ENCODE measurements at regions of chr16 and their contacts with region 1.

Region 1: DNA sequence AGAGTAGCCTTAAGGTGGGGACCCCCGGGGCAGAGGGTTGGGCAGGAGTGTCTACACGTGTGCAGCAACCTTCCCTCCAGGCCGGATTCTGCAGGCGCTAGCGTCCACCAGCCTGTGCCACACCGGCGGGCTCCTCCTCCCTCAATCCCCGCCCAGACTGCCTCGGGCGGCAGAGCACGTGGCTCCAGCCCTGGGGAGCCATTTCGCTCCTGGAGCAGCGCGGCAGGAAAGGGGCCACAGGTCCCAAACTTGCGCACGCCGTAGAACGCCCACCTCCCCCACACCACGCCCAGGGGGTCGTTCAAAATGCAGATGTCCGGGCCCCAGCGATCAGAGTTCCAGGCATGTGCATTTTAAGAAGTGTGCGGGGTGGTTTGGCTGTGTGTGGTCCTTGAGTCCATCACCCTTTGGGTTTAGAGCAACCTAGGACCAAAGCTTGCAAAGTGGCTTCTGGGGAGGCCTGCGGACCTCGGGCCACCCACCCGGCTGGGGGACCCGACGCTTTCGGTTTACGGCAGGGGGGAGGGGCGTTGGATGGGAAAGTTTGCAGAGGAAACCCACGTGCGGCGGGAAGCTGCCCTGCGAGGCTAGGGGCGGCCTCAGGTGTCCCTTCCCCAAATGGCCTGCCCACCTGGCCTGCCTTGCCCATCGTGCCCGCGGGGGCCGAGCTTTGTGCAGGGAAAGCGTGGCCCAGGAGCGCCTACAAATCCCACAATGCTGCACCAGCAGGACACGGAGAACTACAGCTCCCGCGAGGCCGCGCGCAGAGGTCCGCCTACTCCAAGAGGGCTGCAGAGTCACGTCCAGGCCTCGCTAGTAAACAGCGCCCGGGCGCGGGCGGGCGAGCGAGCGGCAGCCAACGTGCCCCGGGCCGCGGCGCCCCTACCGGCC is 1.4 kb downstream of the TFAP4 start:
- DNase-seq: peak; percentile 89 to 96
- ATAC-seq: peak; percentile 73 to 86
- H3K4me3 ChIP-seq: peak overlapping the region; percentile 87
- H3K27ac ChIP-seq: peak overlapping the region; percentile 98 to 99
- H3K4me1 ChIP-seq: peaks cover 10% of the 10 kb centered on the region
- CTCF ChIP-seq: peak; percentile 16; the same call in 1 of the 3 replicates
- EP300 ChIP-seq: no peak
- POLR2A ChIP-seq: peak; percentile 61
- RAD21 ChIP-seq: no peak

Region 2: GRCh38 chr16:4200000-4200780 is 71.2 kb before region 1 on chr16:
- CTCF ChIA-PET with region 1: interaction called, 10 read pairs
- POLR2A ChIA-PET with region 1: interaction called, 4 read pairs
- DNase-seq: peak; percentile 72 to 74
- ATAC-seq: peak; percentile 96
- H3K4me3 ChIP-seq: no peak overlapping the region
- H3K27ac ChIP-seq: peak overlapping the region in 1 of 2 experiments; percentile 65; a peak in 3 of 6 replicates
- H3K4me1 ChIP-seq: peaks cover 7% of the 10 kb centered on the region; the same call in 2 of the 3 replicates
- CTCF ChIP-seq: peak; percentile 66
- EP300 ChIP-seq: no peak
- POLR2A ChIP-seq: no peak
- RAD21 ChIP-seq: peak; percentile 86 to 89

Region 3: DNA sequence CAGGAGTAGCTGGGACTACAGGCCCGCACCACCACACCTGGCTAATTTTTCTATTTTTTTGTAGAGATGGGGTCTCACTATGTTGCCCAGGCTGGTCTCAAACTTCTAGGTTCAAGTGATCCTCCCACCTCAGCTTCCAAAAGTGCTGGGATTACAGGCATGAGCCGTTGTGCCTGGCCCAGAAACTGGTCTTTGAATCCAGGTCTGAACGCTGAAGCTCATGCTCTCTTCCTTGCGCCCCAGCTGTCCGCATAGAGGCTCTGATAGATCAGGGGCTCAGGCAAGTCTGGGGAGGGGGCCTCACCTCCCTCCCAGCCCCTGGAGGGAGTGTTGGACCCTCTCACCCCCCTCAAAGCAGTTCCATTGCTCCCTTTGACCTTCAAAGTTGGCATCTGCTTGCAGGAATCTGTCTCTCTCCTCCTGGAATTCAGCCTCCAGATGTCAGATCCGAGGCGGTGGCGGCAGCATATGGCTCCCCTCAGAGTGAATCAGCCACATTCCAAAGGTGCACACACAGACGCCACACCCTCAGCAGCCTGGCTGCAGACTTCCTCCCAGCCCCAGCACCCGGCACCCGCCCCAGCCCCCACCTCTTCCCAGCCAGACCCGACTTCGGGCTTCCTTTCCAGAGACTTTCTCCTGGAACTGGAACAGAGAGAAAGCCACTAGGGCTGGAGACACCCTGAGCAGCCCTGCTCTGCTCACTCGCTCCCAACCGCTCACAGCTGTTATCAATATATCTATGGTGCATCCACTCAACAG is 27.5 kb after region 1 on chr16:
- CTCF ChIA-PET with region 1: interaction called, 152 read pairs
- POLR2A ChIA-PET with region 1: interaction called, 39 read pairs
- DNase-seq: peak; percentile 95 to 97
- ATAC-seq: peak; percentile 96 to 99
- H3K4me3 ChIP-seq: peak overlapping the region; percentile 11; the same call in 1 of the 3 replicates
- H3K27ac ChIP-seq: peak overlapping the region; percentile 94 to 99
- H3K4me1 ChIP-seq: peaks cover 57% of the 10 kb centered on the region
- CTCF ChIP-seq: no peak
- EP300 ChIP-seq: peak in 1 of 2 experiments; percentile 49; a peak in 2 of 5 replicates
- POLR2A ChIP-seq: peak; percentile 26; the same call in 1 of the 2 replicates
- RAD21 ChIP-seq: peak; percentile 15 to 39; a peak in 2 of 5 replicates

Region 4: DNA sequence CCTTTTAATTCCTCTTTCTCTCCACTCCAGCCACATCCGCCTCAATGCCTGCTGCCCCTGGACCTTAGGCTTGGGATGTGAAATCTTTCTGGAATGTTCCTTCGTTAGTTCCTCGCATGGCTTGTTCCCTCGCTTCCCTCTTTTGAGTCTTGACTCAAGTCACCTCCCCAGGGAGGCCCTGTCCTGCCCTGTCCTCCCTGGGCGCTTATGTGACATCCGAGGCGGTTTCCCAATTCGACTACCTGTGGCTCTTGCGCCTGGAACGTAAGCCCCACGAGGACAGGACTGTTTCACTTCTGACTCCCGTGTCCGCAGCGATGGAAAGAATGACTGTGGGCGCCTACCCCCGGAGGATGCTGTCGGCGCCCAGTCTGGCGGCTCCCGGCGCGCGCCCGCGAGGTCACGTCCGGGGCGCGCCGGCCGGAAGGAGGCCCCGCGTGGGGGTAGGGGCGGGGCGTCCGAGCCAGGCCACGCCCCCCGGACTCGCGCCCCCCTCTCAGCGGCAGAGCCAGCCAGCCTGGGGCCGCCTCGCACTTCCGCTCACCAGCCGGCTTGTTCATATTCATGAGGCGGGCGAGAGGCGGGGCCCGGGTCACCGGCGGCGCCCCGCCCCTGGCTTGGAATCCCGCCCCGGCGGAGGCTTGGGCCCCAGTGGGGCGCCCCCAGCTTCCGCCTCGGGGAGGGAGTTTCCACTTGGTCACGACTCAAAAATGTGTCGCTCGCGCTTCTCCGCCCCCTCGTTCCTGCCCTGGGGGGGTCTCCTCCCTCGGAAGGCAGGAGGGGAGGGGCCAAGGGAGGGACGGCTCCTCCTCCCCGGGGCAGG is 36.0 kb after region 1 on chr16:
- CTCF ChIA-PET with region 1: interaction called, 58 read pairs
- POLR2A ChIA-PET with region 1: interaction called, 4 read pairs
- DNase-seq: peak; percentile 87 to 96
- ATAC-seq: peak; percentile 86 to 87
- H3K4me3 ChIP-seq: peak overlapping the region; percentile 88
- H3K27ac ChIP-seq: peak overlapping the region; percentile 90 to 93
- H3K4me1 ChIP-seq: peaks cover 35% of the 10 kb centered on the region
- CTCF ChIP-seq: no peak
- EP300 ChIP-seq: peak in 1 of 2 experiments; percentile 61; a peak in 1 of 5 replicates
- POLR2A ChIP-seq: peak; percentile 53
- RAD21 ChIP-seq: no peak; a peak in 1 of 5 replicates

Region 5: DNA sequence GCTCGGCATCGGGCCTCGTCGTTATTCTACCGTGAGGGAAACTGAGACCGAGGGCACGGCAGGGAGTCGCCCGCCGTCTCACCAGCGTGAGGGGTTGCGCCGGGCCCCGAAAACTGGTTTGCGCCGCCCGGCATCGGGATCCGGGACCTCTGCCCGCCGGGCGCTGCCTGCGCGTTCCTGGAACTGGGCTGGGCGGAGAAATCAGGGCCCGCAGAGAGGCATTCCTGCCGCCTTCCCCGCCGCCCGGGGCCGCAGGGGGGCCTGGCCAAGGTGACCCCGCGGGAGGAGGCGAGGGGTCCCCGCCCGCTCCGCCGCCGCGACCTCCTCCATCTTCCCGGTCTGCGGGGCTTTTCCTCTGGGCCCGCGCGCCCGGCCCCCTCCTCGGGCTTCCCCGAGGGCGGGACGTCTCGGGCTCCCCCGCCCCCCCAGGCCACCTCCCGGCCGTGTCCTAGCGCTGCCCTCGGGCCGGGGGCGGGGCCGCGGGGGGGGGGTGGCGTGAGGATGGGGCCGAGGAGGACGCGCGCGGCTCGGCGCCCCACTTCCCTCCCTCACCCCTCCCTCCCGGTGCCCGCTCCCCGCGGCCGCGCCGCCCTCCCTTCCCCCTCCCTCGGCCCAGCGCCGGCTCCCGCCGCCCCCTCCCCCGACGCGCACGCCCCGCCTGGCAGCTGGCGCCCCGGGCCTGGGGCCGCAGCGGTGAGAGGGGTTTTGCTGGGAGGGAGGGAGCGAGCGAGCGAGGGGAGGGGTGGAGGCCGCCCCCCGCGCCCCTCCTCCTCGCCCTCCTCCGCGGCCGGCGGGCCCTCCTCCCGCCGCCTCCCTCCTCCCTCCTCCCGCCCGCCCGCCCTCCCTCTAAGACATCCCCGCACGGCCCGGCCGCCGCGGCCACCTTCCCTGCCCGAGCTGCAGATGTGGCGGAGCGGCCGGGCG is 44.0 kb after region 1 on chr16 and contains the start of gene GLIS2:
- CTCF ChIA-PET with region 1: interaction called, 58 read pairs
- POLR2A ChIA-PET with region 1: interaction called, 12 read pairs
- DNase-seq: peak; percentile 78 to 89
- ATAC-seq: peak; percentile 36 to 37
- H3K4me3 ChIP-seq: peak within 1 kb of the TSS; percentile 87
- H3K27ac ChIP-seq: peak within 1 kb of the TSS; percentile 96
- H3K4me1 ChIP-seq: peaks cover 52% of the 10 kb centered on the region
- CTCF ChIP-seq: no peak
- EP300 ChIP-seq: peak in 1 of 2 experiments; percentile 51; a peak in 2 of 5 replicates
- POLR2A ChIP-seq: no peak; the same call in none of the 2 replicates
- RAD21 ChIP-seq: no peak; a peak in 1 of 5 replicates
- polyA plus RNA-seq, gene GLIS2: 5.5 and 6.8 TPM in 2 replicates

Region 6: GRCh38 chr16:4330277-4330874 is 59.0 kb after region 1 on chr16:
- CTCF ChIA-PET with region 1: interaction called, 48 read pairs
- POLR2A ChIA-PET with region 1: interaction called, 5 read pairs
- DNase-seq: peak; percentile 72 to 77
- ATAC-seq: peak; percentile 84 to 90
- H3K4me3 ChIP-seq: no peak overlapping the region
- H3K27ac ChIP-seq: peak overlapping the region in 1 of 2 experiments; percentile 87; a peak in 1 of 6 replicates
- H3K4me1 ChIP-seq: peaks cover 44% of the 10 kb centered on the region
- CTCF ChIP-seq: peak; percentile 92
- EP300 ChIP-seq: no peak
- POLR2A ChIP-seq: no peak
- RAD21 ChIP-seq: peak; percentile 94 to 97

Measured in A549 (cell line).